Adrenal gland (tissue), 19 donors: ENCODE measurements at regions of chr20 and their contacts with region 1.

Region 1: DNA sequence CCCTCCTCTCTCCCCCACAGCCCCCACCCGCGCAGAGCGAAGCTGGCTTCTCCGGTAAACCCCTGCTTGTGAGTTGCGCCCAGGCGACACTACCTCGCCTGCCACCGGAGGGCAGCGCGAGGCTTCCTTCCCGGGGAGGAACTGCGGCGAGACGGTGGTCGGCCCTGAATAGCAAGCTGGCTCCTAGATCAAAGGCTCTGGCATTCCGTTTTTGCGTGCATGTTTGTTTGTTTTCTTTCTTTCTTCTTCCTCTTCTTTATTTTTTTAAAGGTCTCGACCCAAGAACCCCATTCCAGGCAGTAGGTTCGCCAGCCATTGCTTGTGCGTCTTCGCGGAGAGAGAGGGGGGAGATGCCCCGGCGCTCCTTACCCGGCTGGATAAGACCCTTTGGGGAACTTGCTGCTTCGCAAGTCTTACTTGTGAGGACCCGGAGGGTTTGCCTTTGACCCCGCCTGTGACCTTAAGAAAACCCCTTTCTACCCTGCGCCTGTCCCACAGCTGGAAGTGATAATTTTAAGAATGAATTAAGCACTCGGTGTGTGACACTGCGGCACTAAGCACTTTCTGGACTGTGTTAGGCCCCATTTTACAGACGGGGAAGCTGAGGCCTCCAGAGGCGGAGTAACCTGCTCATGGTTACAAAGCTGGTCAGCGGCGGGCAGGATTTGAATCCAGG is 92.7 kb upstream of the SIRPA start:
- DNase-seq: peak; percentile 71 to 84 (median 76)
- H3K4me3 ChIP-seq: peak overlapping the region in 2 of 4 donors; percentile 6 to 71
- H3K27ac ChIP-seq: peak overlapping the region in 4 of 5 donors; percentile 42 to 81 (median 69)
- H3K4me1 ChIP-seq: peaks cover 11 to 22% of the 10 kb centered on the region in 2 donors
- H3K27me3 ChIP-seq: no peaks in the 10 kb centered on the region
- CTCF ChIP-seq: peak; percentile 49 to 87 (median 76)
- POLR2A ChIP-seq: no peak

Region 2: GRCh38 chr20:1888796-1889463 is 86.4 kb after region 1 on chr20:
- intact Hi-C with region 1: loop called (anchors 5 kb)
- DNase-seq: no peak
- H3K4me3 ChIP-seq: no peak overlapping the region
- H3K27ac ChIP-seq: no peak overlapping the region
- H3K4me1 ChIP-seq: peaks cover 12 to 29% of the 10 kb centered on the region in 2 donors
- H3K27me3 ChIP-seq: no peaks in the 10 kb centered on the region
- CTCF ChIP-seq: no peak
- POLR2A ChIP-seq: no peak

Region 3: DNA sequence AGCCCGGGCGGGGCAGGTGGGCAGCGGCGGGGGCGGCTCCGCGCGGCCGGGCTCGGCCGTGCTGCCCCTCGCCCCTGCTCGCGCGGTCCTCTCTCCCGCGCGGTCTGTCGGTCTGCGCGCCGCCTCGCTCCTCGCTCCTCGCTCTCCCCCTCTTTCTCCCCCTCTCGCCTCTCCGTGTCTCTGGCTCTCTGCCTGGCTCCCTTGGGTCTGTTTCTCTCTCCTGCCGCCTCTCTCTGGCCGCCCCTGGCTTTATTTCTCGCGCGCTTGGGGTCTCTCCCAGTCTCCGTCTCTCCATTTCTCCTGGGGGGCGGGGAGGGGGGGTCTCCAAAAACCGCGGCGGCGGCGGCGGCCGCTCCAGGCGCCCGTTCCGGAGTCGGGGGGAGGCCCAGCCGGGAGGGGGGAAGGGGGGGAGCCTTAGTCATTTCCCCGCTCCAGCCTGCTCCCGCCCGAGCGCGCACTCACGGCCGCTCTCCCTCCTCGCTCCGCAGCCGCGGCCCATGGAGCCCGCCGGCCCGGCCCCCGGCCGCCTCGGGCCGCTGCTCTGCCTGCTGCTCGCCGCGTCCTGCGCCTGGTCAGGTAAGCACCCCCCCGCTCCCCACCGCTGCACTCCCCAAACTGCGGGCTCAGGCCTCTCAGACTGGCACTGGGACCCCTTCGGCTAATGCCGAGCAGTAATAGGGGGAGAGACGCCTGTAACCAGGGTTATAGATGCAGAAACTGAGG is 92.6 kb after region 1 on chr20 and contains the start of gene SIRPA:
- intact Hi-C with region 1: loop called in 1 of 2 experiments (anchors 5 kb)
- DNase-seq: peak; percentile 75 to 87 (median 80)
- H3K4me3 ChIP-seq: peak within 1 kb of the TSS in 3 of 4 donors; percentile 57 to 94 (median 70)
- H3K27ac ChIP-seq: peak within 1 kb of the TSS; percentile 75 to 99 (median 91)
- H3K4me1 ChIP-seq: peaks cover 20 to 65% of the 10 kb centered on the region in 2 donors
- H3K27me3 ChIP-seq: no peaks in the 10 kb centered on the region
- CTCF ChIP-seq: no peak
- POLR2A ChIP-seq: peak; percentile 21 to 57
- total RNA-seq, gene SIRPA: 22.2 to 102 (median 72.5) TPM

Region 4: DNA sequence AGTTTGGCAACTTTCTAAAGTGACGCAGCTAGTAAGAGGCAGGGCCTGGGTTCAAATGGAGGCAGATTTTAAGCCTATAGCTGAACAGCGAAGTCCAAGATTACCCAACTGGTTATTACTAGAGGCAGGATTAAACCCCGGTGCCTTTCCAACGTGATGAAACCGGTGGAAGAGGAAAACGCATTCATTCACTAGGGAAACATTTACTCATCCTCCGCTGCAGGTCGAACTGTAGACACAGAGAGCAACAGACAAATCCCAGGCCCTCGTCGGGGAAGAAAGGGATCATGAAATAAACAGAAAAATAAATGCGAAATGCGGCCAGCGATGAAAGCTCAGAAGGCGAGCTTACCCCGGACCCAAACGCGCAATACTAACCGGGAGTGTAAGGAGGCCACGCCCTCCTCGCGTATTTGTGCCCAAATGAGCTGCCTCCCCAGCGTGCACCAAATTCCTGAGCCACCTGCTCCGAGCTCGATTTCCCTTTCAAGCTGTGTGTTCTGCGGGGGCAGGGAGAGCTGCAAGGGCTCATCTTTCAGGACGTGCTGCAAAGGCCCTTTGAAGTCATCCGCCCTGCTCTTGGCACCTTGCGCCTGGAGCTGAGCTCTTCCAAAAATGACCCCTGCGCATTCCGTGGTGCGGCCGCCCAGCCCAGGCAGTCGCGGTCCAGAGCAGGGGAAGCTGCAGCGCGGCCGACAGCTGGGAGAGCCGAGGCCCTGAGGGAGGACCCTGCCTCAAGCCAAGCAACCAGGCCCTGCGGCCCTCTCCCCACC is 144.4 kb after region 1 on chr20:
- intact Hi-C with region 1: loop called in 1 of 2 experiments (anchors 10 kb)
- DNase-seq: no peak
- H3K4me3 ChIP-seq: no peak overlapping the region
- H3K27ac ChIP-seq: peak overlapping the region in 4 of 5 donors; percentile 3 to 72 (median 18)
- H3K4me1 ChIP-seq: peaks cover 18 to 45% of the 10 kb centered on the region in 2 donors
- H3K27me3 ChIP-seq: no peaks in the 10 kb centered on the region
- CTCF ChIP-seq: no peak
- POLR2A ChIP-seq: no peak

Region 5: DNA sequence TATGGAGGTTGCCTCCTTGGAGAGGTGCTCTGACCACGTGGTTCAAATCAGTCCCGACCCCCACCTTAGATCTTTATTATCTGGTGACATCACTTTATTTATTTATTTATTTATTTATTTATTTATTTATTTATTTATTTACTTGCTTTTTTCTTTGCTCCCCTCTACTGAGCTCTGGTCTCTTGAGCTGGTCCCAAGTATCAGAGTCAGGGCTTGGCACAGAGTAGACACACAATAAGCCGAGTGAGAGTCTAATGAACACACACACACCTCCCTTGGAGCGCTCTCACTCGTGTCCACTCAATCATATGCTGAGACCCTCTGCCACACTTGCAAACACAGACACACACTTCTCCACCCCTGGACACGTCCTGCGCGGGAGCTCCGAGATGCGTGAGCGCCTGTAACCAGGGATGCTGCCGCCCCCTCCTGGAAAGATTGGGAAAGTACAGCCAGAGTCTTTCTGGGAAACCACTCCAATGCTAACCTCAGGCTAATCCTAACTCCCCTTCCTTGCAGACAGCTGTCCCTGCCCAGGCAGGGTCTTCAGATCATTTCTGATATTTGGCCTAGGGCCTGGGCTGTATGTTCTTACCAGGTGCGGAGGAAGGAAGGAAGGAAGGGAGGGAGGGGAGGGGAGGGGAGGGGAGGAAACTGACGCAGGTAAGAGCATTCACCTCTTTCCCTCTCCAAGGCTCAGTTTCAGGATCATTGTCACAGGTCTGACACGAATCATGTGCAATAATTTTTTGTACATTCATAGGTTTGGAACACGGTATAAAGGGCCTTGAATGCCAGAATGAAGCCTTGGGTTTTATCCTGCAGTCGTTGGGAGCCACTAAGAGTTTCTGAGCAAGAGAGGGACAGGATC is 370.0 kb after region 1 on chr20:
- intact Hi-C with region 1: no loop called
- DNase-seq: peak; percentile 62 to 91 (median 78)
- H3K4me3 ChIP-seq: no peak overlapping the region
- H3K27ac ChIP-seq: no peak overlapping the region
- H3K4me1 ChIP-seq: no peaks in the 10 kb centered on the region
- H3K27me3 ChIP-seq: no peaks in the 10 kb centered on the region
- CTCF ChIP-seq: peak; percentile 77 to 96 (median 90)
- POLR2A ChIP-seq: no peak